ENCODE measurements at regions of chr3 and their contacts with region 1.

Region 1: GRCh38 chr3:125585595-125586223 is 9.6 kb downstream of the OSBPL11 start:
- DNase-seq: peak in 4 of 5 donors; percentile 46 to 56 (median 53)
- ATAC-seq: peak; percentile 31 to 77 (median 70)
- H3K4me3 ChIP-seq: no peak overlapping the region
- H3K27ac ChIP-seq: no peak overlapping the region
- H3K4me1 ChIP-seq: peaks cover 0 to 51% (median 7%) of the 10 kb centered on the region in 12 donors
- H3K27me3 ChIP-seq: no peaks in the 10 kb centered on the region
- CTCF ChIP-seq: peak; percentile 72 to 92 (median 84)
- POLR2A ChIP-seq: no peak

Region 2: GRCh38 chr3:124928333-124929202 is 657.1 kb before region 1 on chr3:
- intact Hi-C with region 1: loop called in 4 of 10 experiments (anchors 5 to 10 kb)
- DNase-seq: peak; percentile 50 to 79 (median 60)
- ATAC-seq: peak in 2 of 4 donors; percentile 68 to 76
- H3K4me3 ChIP-seq: no peak overlapping the region
- H3K27ac ChIP-seq: no peak overlapping the region
- H3K4me1 ChIP-seq: peaks cover 0 to 11% (median 0%) of the 10 kb centered on the region in 12 donors
- H3K27me3 ChIP-seq: no peaks in the 10 kb centered on the region
- CTCF ChIP-seq: peak; percentile 61 to 87 (median 75)
- POLR2A ChIP-seq: no peak

Region 3: GRCh38 chr3:124935264-124935663 is 650.4 kb before region 1 on chr3:
- intact Hi-C with region 1: loop called in 1 of 10 experiments (anchors 10 kb)
- DNase-seq: no peak
- ATAC-seq: no peak
- H3K4me3 ChIP-seq: no peak overlapping the region
- H3K27ac ChIP-seq: no peak overlapping the region
- H3K4me1 ChIP-seq: no peaks in the 10 kb centered on the region
- H3K27me3 ChIP-seq: peaks cover 0 to 5% (median 0%) of the 10 kb centered on the region in 9 donors
- CTCF ChIP-seq: no peak
- POLR2A ChIP-seq: no peak

Region 4: GRCh38 chr3:125480656-125481374 is 104.9 kb before region 1 on chr3:
- intact Hi-C with region 1: loop called in 1 of 10 experiments (anchors 10 kb)
- DNase-seq: no peak
- ATAC-seq: no peak
- H3K4me3 ChIP-seq: no peak overlapping the region
- H3K27ac ChIP-seq: no peak overlapping the region
- H3K4me1 ChIP-seq: no peaks in the 10 kb centered on the region
- H3K27me3 ChIP-seq: no peaks in the 10 kb centered on the region
- CTCF ChIP-seq: no peak
- POLR2A ChIP-seq: no peak

Region 5: DNA sequence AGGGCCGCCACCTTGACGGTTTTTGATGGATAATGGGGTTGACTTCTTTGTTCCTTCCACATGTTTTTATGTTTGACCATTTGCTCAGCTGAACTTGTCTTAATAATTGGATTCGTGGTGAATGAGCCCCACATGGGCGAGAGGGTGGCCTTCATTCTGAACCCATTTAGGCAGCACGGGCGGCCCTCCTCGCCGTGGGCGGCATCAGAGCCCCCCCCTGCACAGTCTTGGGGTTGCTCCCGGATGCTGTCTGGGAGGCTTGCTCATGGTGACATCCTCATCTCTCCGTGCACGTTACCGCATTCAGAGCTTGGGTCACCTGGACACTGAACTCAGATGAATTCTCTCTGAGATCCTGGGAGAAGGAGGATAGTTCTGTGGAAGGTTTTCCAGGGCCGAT is 181.9 kb after region 1 on chr3:
- intact Hi-C with region 1: no loop called
- DNase-seq: no peak
- ATAC-seq: no peak
- H3K4me3 ChIP-seq: no peak overlapping the region
- H3K27ac ChIP-seq: no peak overlapping the region
- H3K4me1 ChIP-seq: peaks cover 0 to 13% (median 0%) of the 10 kb centered on the region in 12 donors
- H3K27me3 ChIP-seq: peaks cover 0 to 12% (median 0%) of the 10 kb centered on the region in 9 donors
- CTCF ChIP-seq: no peak
- POLR2A ChIP-seq: no peak

Measured in heart left ventricle (tissue), 16 donors.